T-cell (primary cell): ENCODE measurements at regions of chr9 and their contacts with region 1.

Region 1: DNA sequence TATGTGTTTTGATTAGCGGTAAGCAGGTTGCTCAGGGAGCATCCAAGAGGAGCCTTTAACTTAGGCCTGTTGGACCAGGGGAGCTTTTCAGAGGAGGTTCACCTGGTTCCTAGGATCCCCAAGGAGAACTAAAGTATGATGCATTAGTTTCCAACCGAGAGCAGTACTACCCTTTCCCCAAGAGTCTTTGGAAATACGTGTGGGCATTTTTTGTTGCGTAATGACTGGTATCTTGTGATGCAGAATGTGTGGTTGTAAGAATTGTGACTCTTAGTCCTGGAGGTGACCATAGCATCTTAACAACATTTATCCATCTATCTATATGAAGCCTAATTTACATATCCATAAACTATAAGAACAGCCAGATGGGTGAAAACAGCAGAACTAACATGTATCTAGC is 11.0 kb downstream of the CFAP95 start:
- DNase-seq: no peak
- ATAC-seq: no peak
- H3K4me3 ChIP-seq: no peak overlapping the region
- H3K4me3 Mint-ChIP-seq: no peak overlapping the region
- H3K27ac ChIP-seq: no peak overlapping the region
- H3K27ac Mint-ChIP-seq: no peak overlapping the region
- H3K4me1 ChIP-seq: peaks cover 12 to 62% of the 10 kb centered on the region in 2 experiments
- H3K4me1 Mint-ChIP-seq: peaks cover 38 to 41% (median 39%) of the 10 kb centered on the region in 3 donors
- H3K27me3 ChIP-seq: peaks cover 0 to 4% of the 10 kb centered on the region in 2 experiments
- H3K27me3 Mint-ChIP-seq: no peaks in the 10 kb centered on the region

Region 2: DNA sequence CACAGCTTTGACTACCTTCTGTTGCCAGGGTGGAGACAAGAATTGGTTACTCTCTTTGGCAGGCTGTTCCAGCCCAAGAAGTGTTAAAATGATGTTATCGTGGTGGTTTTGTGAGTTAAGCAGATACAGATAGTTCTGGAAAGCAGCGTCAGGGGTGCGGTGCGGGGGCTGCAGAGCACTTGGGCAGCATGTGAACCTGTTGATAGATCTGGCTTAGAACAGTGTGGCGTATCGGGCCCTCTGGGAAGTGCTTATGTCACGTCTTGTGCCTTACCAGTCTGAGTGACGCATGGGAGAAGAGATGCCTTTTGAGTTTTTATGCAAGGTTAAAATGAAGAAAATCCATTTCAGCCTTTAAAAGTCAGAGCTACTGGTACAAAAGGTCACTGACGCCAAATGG is 970.2 kb before region 1 on chr9:
- CTCF ChIA-PET with region 1: no interaction called
- POLR2A ChIA-PET with region 1: no interaction called
- DNase-seq: no peak
- ATAC-seq: no peak
- H3K4me3 ChIP-seq: no peak overlapping the region
- H3K4me3 Mint-ChIP-seq: no peak overlapping the region
- H3K27ac ChIP-seq: no peak overlapping the region
- H3K27ac Mint-ChIP-seq: no peak overlapping the region
- H3K4me1 ChIP-seq: no peaks in the 10 kb centered on the region
- H3K4me1 Mint-ChIP-seq: no peaks in the 10 kb centered on the region
- H3K27me3 ChIP-seq: peaks cover 0 to 3% of the 10 kb centered on the region in 2 experiments
- H3K27me3 Mint-ChIP-seq: peaks cover 8 to 9% of the 10 kb centered on the region in 2 donors

Region 3: GRCh38 chr9:69085569-69086283 is 745.9 kb before region 1 on chr9:
- CTCF ChIA-PET with region 1: no interaction called
- POLR2A ChIA-PET with region 1: no interaction called
- DNase-seq: no peak
- ATAC-seq: no peak
- H3K4me3 ChIP-seq: no peak overlapping the region
- H3K4me3 Mint-ChIP-seq: no peak overlapping the region
- H3K27ac ChIP-seq: no peak overlapping the region
- H3K27ac Mint-ChIP-seq: no peak overlapping the region
- H3K4me1 ChIP-seq: no peaks in the 10 kb centered on the region
- H3K4me1 Mint-ChIP-seq: no peaks in the 10 kb centered on the region
- H3K27me3 ChIP-seq: no peaks in the 10 kb centered on the region
- H3K27me3 Mint-ChIP-seq: no peaks in the 10 kb centered on the region

Region 4: GRCh38 chr9:69357030-69357775 is 474.4 kb before region 1 on chr9:
- CTCF ChIA-PET with region 1: no interaction called
- POLR2A ChIA-PET with region 1: no interaction called
- DNase-seq: no peak
- ATAC-seq: no peak
- H3K4me3 ChIP-seq: no peak overlapping the region
- H3K4me3 Mint-ChIP-seq: no peak overlapping the region
- H3K27ac ChIP-seq: no peak overlapping the region
- H3K27ac Mint-ChIP-seq: no peak overlapping the region
- H3K4me1 ChIP-seq: no peaks in the 10 kb centered on the region
- H3K4me1 Mint-ChIP-seq: no peaks in the 10 kb centered on the region
- H3K27me3 ChIP-seq: no peaks in the 10 kb centered on the region
- H3K27me3 Mint-ChIP-seq: peaks cover 9 to 18% of the 10 kb centered on the region in 2 donors

Region 5: GRCh38 chr9:69719367-69719766 is 112.2 kb before region 1 on chr9:
- CTCF ChIA-PET with region 1: interaction called in 1 of 2 experiments, 10 read pairs
- POLR2A ChIA-PET with region 1: no interaction called
- DNase-seq: no peak
- ATAC-seq: no peak
- H3K4me3 ChIP-seq: no peak overlapping the region
- H3K4me3 Mint-ChIP-seq: no peak overlapping the region
- H3K27ac ChIP-seq: no peak overlapping the region
- H3K27ac Mint-ChIP-seq: no peak overlapping the region
- H3K4me1 ChIP-seq: no peaks in the 10 kb centered on the region
- H3K4me1 Mint-ChIP-seq: no peaks in the 10 kb centered on the region
- H3K27me3 ChIP-seq: no peaks in the 10 kb centered on the region
- H3K27me3 Mint-ChIP-seq: no peaks in the 10 kb centered on the region

Region 6: DNA sequence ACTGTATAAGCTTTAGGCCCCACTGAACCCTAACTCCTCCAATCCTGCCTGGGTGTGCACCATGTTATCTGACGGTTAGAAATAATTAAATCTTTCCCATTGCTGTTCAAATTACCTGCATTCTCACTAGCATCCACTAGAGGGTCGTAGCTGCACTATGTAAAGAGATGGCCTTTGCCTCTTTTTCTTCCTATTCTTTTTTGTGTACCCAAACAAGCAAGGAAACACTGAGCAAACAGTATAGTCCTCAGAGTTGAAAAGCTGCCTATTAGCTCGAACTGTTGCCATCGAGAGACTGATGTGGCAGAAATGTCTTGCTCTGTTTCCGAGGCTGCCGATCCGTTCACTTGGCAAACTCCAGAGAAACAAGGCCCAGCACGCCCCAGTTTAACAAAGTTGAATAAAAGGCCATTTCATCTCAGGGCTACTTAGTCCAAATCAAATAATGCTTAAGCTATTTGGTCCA is 1453.6 kb after region 1 on chr9:
- CTCF ChIA-PET with region 1: no interaction called
- POLR2A ChIA-PET with region 1: no interaction called
- DNase-seq: peak in 13 of 35 experiments; percentile 2 to 56 (median 11)
- ATAC-seq: peak in 3 of 4 experiments; percentile 32 to 51 (median 42)
- H3K4me3 ChIP-seq: no peak overlapping the region
- H3K4me3 Mint-ChIP-seq: no peak overlapping the region
- H3K27ac ChIP-seq: no peak overlapping the region
- H3K27ac Mint-ChIP-seq: no peak overlapping the region
- H3K4me1 ChIP-seq: no peaks in the 10 kb centered on the region
- H3K4me1 Mint-ChIP-seq: no peaks in the 10 kb centered on the region
- H3K27me3 ChIP-seq: no peaks in the 10 kb centered on the region
- H3K27me3 Mint-ChIP-seq: peaks cover 0 to 10% of the 10 kb centered on the region in 2 donors